ENCODE measurements at regions of chrX and their contacts with region 1.

Region 1: GRCh38 chrX:53071604-53072417 is 10.4 kb upstream of the TSPYL2 start:
- DNase-seq: peak; percentile 64
- H3K4me3 ChIP-seq: peak overlapping the region; percentile 6 to 46 (median 36)
- H3K27ac ChIP-seq: no peak overlapping the region
- H3K4me1 ChIP-seq: peaks cover 4% of the 10 kb centered on the region
- H3K27me3 ChIP-seq: peaks cover 3% of the 10 kb centered on the region
- CTCF ChIP-seq: peak; percentile 57 to 74

Region 2: DNA sequence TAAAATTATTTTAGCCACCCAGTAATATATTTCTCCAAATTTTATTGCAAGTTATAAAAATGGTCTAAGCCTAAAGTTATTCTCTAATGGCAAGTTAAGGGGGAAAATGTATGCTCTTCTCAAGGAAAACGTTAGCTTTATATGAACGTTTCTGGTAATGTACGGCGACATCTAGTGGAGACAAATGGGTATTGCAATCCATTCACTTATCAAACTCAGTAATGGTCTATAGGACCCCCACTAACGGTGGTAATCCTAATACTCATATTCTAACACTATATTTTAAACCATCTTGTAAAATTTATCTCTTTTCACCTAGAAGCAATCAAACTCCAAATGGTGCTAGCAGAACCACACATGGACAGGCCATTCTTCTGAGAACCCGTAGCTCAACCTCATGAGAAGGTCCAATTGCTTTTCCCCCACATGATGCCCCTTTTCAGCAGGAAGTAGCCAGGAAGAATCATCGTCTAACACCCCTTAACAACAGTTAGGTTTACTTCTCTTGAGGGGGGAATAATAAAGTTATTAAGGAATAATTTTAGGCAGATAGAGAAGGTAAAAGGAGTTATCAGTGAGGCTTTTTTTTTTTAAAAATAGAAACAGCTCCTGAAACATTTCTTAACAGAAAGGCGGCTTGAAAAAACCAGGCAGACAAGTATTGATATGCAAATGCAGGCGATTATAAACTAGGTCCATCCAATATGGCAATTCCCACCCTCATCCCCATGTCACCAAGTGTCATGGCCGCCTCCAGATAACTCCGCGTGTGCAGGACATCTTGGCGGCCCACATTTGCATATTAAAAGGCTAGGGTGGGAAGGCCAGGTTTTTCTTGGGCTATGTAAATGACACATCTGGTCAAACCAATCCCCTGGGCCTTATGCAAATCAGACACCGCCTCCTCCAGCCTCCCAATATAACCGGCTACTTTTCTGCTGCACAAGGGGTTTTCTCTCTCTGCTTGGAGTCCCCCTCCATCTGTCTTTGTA is 1610.5 kb before region 1 on chrX:
- CTCF ChIA-PET with region 1: interaction called, 10 read pairs
- dilution Hi-C with region 1: no loop called
- in situ Hi-C with region 1: no loop called
- intact Hi-C with region 1: no loop called
- DNase-seq: peak; percentile 16
- H3K4me3 ChIP-seq: no peak overlapping the region
- H3K27ac ChIP-seq: no peak overlapping the region
- H3K4me1 ChIP-seq: no peaks in the 10 kb centered on the region
- H3K27me3 ChIP-seq: no peaks in the 10 kb centered on the region
- CTCF ChIP-seq: peak; percentile 76 to 84

Region 3: DNA sequence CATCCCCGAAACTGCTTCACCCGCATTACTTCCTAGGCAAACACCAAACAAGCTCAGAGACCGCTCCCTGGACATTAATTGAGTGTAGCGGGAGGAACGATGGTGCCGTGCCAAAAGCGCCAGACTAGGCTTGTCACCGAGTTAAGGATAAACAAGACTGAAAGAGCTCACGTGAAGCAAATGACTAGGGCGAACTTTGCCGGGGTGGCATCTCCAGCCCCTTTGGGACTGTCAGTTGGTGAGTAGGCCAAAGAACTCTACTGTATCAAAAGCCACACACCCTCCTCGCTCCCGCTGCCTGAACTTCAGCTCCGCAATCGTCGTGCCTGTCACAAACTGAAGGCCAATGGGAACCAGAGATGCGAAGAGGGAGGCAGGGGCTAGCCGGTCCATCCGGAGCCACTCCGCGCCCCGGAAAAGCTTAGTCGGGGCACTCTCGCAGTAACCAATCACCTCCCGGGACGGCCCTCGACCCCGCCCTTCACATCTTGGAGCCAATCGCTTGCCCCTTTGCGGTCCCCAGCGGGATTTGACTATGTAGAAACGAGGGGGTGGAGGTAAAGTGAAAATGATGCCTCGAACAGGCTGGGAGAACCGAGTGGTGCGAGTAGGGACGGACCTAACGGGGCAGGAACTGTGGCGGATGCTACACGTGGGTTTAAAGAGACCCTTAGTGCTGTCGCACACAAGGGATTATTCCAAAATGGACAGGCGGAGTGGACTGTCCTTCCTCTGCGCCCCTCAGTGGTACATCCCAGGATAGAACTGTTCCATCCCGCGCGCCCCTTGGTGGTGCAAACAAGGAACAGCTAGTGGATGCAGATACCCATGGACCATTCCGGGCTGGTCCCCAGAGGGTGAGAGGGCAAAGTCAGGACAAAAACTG is 76.4 kb before region 1 on chrX:
- CTCF ChIA-PET with region 1: no interaction called
- dilution Hi-C with region 1: no loop called
- in situ Hi-C with region 1: no loop called
- intact Hi-C with region 1: no loop called
- DNase-seq: peak; percentile 91
- H3K4me3 ChIP-seq: peak overlapping the region; percentile 60 to 66 (median 64)
- H3K27ac ChIP-seq: peak overlapping the region; percentile 87
- H3K4me1 ChIP-seq: peaks cover 3% of the 10 kb centered on the region
- H3K27me3 ChIP-seq: no peaks in the 10 kb centered on the region
- CTCF ChIP-seq: peak; percentile 54 to 73

Region 4: GRCh38 chrX:53093748-53094583 is 22.2 kb after region 1 on chrX and contains the start of gene KANTR:
- CTCF ChIA-PET with region 1: no interaction called
- dilution Hi-C with region 1: no loop called
- in situ Hi-C with region 1: no loop called
- intact Hi-C with region 1: loop called (anchors 1 kb)
- DNase-seq: peak; percentile 92
- H3K4me3 ChIP-seq: peak within 1 kb of the TSS; percentile 56 to 72 (median 60)
- H3K27ac ChIP-seq: peak within 1 kb of the TSS; percentile 71
- H3K4me1 ChIP-seq: peaks cover 3% of the 10 kb centered on the region
- H3K27me3 ChIP-seq: no peaks in the 10 kb centered on the region
- CTCF ChIP-seq: peak in 1 of 2 donors; percentile 12
- total RNA-seq, gene KANTR: 5.1 to 8.0 TPM

Region 5: DNA sequence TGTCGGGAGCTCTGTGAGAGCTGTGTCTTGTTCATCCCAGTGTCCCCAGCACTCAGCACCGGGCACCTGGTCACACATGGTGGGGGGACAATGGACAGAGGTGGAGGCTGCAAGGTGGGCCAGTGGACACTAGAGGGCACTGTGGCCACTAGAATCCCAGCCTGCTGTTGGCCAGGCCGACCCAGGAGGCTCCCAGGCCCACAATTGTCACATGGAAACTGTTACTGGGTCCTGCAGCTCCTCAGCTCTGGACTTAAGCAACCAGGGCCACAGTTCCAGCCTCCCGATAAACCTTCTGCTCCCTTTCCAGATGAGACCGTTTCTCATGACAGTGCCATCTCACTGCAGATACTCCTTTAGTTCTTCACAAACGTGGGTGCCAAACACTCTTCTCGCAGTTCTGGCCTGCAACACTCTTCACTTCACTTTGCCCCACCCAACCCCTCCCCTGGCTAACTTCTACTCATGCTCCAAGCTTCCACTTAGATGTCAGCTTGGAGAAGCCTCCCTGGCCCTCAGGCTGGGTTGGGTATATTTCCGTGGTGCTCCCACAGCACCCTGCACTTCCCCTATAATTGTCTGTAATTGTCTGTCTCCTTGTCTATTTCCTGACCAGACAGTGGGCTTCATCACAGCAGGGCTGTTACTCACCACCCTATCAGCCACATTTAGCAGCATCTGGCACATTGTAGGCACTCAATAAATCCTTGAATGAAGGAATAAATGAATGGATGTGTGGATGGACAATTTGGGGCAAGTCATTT is 213.1 kb after region 1 on chrX:
- CTCF ChIA-PET with region 1: no interaction called
- dilution Hi-C with region 1: no loop called
- in situ Hi-C with region 1: no loop called
- intact Hi-C with region 1: no loop called
- DNase-seq: peak; percentile 26
- H3K4me3 ChIP-seq: no peak overlapping the region
- H3K27ac ChIP-seq: no peak overlapping the region
- H3K4me1 ChIP-seq: peaks cover 14% of the 10 kb centered on the region
- H3K27me3 ChIP-seq: no peaks in the 10 kb centered on the region
- CTCF ChIP-seq: peak; percentile 86 to 95

Region 6: DNA sequence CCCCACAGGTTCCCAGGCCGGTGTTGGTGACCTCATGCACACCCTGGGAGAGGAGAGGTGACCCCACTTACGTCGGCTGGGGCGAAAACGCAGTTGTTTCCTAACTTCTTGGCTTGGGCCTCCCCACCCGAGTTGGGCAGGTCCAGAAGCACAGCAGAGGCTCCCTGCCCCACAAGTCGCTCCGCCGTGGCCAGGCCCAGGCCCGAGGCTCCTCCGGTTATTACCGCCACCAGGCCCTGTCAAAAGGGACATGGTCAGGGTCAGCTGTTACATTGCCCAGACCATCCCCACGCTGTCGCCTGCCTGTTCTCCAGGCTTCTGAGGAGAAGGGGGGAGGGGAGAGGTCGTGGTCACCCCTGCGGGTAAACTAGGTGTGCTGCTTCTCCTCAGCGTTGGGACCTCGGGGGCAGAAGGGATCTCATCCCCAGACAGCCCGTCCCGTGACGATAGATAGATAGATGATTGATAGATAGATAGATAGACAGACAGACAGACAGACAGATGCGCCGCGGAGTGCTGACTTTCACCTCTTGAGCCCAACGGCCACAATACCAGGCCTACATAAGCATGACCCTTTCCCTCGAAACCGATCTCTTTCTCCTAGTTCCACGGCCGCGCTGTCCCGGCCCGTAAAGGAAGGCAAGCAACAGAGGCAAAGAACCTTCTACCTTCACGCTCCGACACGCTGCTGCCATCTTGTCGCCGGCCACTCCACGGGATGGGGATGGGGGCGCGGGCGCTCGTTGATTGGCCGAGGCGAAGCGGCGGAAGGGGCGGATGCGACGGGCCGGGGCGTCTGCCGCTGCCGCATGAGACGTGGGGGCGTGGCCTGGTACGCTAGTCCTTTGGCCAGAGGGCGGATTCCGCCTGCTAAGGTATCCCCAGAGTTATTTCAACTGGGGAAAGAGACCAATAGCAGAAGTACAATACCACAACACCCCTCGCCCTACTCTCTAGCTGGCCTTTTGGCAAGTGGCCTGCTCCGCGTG is 362.1 kb after region 1 on chrX and contains the start of gene HSD17B10:
- CTCF ChIA-PET with region 1: no interaction called
- dilution Hi-C with region 1: no loop called
- in situ Hi-C with region 1: no loop called
- intact Hi-C with region 1: loop called (anchors 5 kb)
- DNase-seq: peak; percentile 76
- H3K4me3 ChIP-seq: peak within 1 kb of the TSS; percentile 36 to 65 (median 63)
- H3K27ac ChIP-seq: peak within 1 kb of the TSS; percentile 56
- H3K4me1 ChIP-seq: peaks cover 4% of the 10 kb centered on the region
- H3K27me3 ChIP-seq: peaks cover 3% of the 10 kb centered on the region
- CTCF ChIP-seq: no peak
- total RNA-seq, gene HSD17B10: 71.7 to 74.6 TPM

Measured in mammary epithelial cell (primary cell).